T-cell (primary cell): ENCODE measurements at regions of chr1 and their contacts with region 1.

Region 1: DNA sequence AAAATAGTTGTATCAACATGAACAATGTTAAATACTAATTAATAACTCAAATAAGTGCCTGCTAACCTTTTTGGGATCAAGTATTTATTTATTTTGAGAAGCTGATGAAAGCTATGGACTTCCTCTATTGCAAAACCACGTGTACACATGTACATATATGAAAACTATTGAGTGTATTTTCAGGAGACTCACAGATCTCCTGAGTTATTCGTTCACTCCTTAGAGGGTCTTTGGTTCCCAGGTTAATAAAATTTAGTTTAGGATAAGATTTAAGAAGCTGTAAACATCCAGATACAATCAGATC is 130.5 kb downstream of the DISC1 start:
- DNase-seq: no peak
- ATAC-seq: no peak
- H3K4me3 ChIP-seq: no peak overlapping the region
- H3K4me3 Mint-ChIP-seq: no peak overlapping the region
- H3K27ac ChIP-seq: no peak overlapping the region
- H3K27ac Mint-ChIP-seq: no peak overlapping the region
- H3K4me1 ChIP-seq: no peaks in the 10 kb centered on the region
- H3K4me1 Mint-ChIP-seq: peaks cover 0 to 7% (median 3%) of the 10 kb centered on the region in 3 donors
- H3K27me3 ChIP-seq: no peaks in the 10 kb centered on the region
- H3K27me3 Mint-ChIP-seq: no peaks in the 10 kb centered on the region

Region 2: GRCh38 chr1:231801042-231801585 is 44.1 kb after region 1 on chr1:
- CTCF ChIA-PET with region 1: no interaction called
- POLR2A ChIA-PET with region 1: interaction called in 1 of 2 experiments, 10 read pairs
- DNase-seq: no peak
- ATAC-seq: no peak
- H3K4me3 ChIP-seq: no peak overlapping the region
- H3K4me3 Mint-ChIP-seq: no peak overlapping the region
- H3K27ac ChIP-seq: no peak overlapping the region
- H3K27ac Mint-ChIP-seq: no peak overlapping the region
- H3K4me1 ChIP-seq: no peaks in the 10 kb centered on the region
- H3K4me1 Mint-ChIP-seq: no peaks in the 10 kb centered on the region
- H3K27me3 ChIP-seq: no peaks in the 10 kb centered on the region
- H3K27me3 Mint-ChIP-seq: no peaks in the 10 kb centered on the region

Region 3: GRCh38 chr1:231841616-231842344 is 84.7 kb after region 1 on chr1:
- CTCF ChIA-PET with region 1: no interaction called
- POLR2A ChIA-PET with region 1: no interaction called
- DNase-seq: no peak
- ATAC-seq: no peak
- H3K4me3 ChIP-seq: no peak overlapping the region
- H3K4me3 Mint-ChIP-seq: no peak overlapping the region
- H3K27ac ChIP-seq: no peak overlapping the region
- H3K27ac Mint-ChIP-seq: no peak overlapping the region
- H3K4me1 ChIP-seq: no peaks in the 10 kb centered on the region
- H3K4me1 Mint-ChIP-seq: peaks cover 22 to 29% (median 23%) of the 10 kb centered on the region in 3 donors
- H3K27me3 ChIP-seq: no peaks in the 10 kb centered on the region
- H3K27me3 Mint-ChIP-seq: no peaks in the 10 kb centered on the region

Region 4: DNA sequence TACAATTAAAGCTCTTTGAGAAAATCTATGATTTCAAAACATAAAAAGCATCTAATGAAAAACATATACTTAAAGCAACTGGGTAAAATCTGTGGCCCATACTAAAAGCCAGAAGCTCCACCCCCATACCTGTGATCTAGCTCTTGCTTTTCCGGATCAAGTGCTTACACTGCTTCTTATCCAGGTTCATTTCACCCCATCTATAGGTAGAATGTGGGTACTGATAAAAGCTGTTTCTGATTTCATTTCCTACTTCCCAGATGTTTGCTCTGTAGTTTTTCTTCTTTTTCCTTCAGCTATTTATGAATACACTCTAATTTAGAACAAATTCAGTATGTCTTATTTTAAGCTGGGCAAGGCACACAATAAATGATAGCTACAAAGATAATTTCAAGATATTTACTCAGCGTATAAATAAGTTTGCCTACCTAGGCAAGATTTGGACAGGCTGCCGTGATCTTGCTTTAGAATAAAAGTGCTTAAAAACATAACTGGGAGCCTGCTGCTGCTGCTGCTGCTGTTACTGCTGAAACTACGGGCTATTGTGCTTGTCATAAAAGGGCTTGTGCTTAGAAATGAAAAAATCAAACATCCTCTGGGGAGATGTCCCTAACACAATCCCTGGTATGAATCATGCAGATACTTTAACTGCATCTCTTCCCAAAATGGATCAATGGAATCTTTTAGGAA is 870.7 kb after region 1 on chr1:
- CTCF ChIA-PET with region 1: interaction called in 1 of 2 experiments, 16 read pairs
- POLR2A ChIA-PET with region 1: no interaction called
- DNase-seq: peak in 14 of 35 experiments; percentile 5 to 74 (median 27)
- ATAC-seq: peak in 3 of 4 experiments; percentile 25 to 62 (median 38)
- H3K4me3 ChIP-seq: no peak overlapping the region
- H3K4me3 Mint-ChIP-seq: peak overlapping the region; percentile 22 to 89 (median 80)
- H3K27ac ChIP-seq: no peak overlapping the region
- H3K27ac Mint-ChIP-seq: no peak overlapping the region
- H3K4me1 ChIP-seq: peaks cover 8 to 19% of the 10 kb centered on the region in 2 experiments
- H3K4me1 Mint-ChIP-seq: peaks cover 21 to 28% (median 28%) of the 10 kb centered on the region in 3 donors
- H3K27me3 ChIP-seq: peaks cover 0 to 17% of the 10 kb centered on the region in 2 experiments
- H3K27me3 Mint-ChIP-seq: peaks cover 18 to 23% of the 10 kb centered on the region in 2 donors